A549 (cell line): ENCODE measurements at regions of chr2 and their contacts with region 1.

Region 1: GRCh38 chr2:74587664-74588277 is 33.3 kb downstream of the DOK1 start:
- DNase-seq: peak; percentile 77 to 82
- ATAC-seq: peak; percentile 91 to 92
- H3K4me3 ChIP-seq: no peak overlapping the region
- H3K27ac ChIP-seq: no peak overlapping the region
- H3K4me1 ChIP-seq: peaks cover 14% of the 10 kb centered on the region
- CTCF ChIP-seq: peak; percentile 91
- EP300 ChIP-seq: no peak
- POLR2A ChIP-seq: no peak
- RAD21 ChIP-seq: peak; percentile 93 to 95

Region 2: DNA sequence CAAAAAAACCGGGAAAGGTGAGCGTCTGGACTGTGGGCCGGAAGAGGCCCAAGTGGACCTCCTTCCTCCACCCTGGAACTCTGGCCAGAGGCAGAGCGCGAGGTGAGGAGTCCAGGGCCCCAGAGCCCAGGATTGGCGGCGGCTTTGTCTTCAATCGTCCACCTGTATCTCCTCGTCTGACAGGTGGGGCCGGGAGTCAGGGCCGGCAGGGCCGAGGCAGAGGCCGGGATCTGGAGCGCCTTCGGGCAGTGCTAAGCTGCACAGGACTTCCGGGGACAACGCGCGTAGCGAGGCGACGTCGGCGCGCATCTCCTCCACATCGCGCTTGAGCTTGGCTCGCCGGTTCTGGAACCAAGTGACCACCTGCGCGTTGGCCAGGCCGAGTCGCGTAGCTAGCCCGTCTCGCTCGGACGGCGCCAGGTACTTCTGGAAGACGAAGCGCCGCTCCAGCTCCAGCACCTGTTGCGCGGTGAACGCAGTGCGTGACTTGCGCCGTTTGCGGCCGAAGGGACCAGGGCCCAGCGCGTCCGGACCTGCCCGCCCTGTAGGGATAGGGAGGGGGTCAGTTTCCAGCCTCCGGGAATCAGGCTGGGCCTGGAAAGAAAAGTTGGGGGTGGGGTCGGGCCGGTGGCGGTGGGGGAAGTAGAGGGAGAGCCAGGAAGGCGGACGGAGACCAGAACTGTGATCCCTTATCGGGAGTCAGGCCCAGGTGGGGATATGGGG is 89.8 kb before region 1 on chr2:
- CTCF ChIA-PET with region 1: interaction called, 29 read pairs
- POLR2A ChIA-PET with region 1: interaction called, 3 read pairs
- DNase-seq: no peak
- ATAC-seq: no peak
- H3K4me3 ChIP-seq: no peak overlapping the region
- H3K27ac ChIP-seq: no peak overlapping the region
- H3K4me1 ChIP-seq: peaks cover 5% of the 10 kb centered on the region; the same call in 2 of the 3 replicates
- CTCF ChIP-seq: no peak
- EP300 ChIP-seq: no peak
- POLR2A ChIP-seq: no peak
- RAD21 ChIP-seq: no peak

Region 3: DNA sequence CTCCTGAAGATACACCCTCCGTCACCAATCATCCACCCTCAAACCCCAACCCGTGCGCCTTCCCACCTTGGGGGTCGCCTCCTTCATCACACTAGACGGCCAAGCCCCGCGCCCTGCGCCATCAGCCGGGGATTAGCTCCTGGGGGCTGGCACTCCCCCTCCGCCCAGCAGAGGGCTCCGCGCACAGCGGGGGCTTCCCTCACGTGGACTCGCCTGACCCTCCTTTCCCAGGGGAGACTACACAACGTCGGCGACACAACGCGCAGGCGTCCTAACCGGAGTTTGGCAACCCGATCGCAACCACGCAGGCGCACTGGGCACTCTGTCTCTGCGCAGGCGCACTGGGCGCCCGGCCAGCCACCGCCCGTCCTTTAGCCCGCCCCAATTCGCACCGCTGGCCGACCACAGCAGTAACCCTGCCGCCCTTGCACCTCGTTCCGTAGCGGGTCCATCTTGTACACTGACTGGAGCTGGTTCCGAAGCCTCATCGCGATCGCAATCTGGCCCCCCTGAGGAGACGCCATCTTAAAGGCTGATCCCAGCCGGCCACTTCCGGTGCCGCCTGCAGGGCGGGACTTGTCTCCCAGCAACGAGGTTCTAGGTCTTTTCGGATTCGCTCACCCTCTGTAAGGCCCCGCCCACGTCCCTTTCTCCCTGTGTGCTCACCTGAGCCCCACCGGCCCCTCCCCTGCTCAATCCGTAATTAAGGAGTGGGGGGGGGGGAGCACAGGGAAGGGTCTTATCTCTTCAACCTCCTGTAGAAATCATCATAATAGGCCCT is 80.4 kb before region 1 on chr2 and contains the start of gene PCGF1:
- CTCF ChIA-PET with region 1: interaction called, 38 read pairs
- POLR2A ChIA-PET with region 1: interaction called, 4 read pairs
- DNase-seq: peak; percentile 97 to 99
- ATAC-seq: peak; percentile 81 to 91
- H3K4me3 ChIP-seq: peak within 1 kb of the TSS; percentile 78
- H3K27ac ChIP-seq: peak within 1 kb of the TSS; percentile 95 to 99
- H3K4me1 ChIP-seq: peaks cover 28% of the 10 kb centered on the region
- CTCF ChIP-seq: peak; percentile 47; the same call in 2 of the 3 replicates
- EP300 ChIP-seq: no peak
- POLR2A ChIP-seq: peak; percentile 77
- RAD21 ChIP-seq: peak in 1 of 2 experiments; percentile 40; a peak in 2 of 5 replicates
- polyA plus RNA-seq, gene PCGF1: 53.6 and 55.3 TPM in 2 replicates

Region 4: GRCh38 chr2:74553892-74554645 is 33.7 kb before region 1 on chr2 and contains the start of gene LOXL3:
- CTCF ChIA-PET with region 1: interaction called, 63 read pairs
- POLR2A ChIA-PET with region 1: interaction called, 3 read pairs
- DNase-seq: peak; percentile 80
- ATAC-seq: peak; percentile 73 to 84
- H3K4me3 ChIP-seq: peak within 1 kb of the TSS; percentile 56
- H3K27ac ChIP-seq: peak within 1 kb of the TSS; percentile 63 to 96
- H3K4me1 ChIP-seq: peaks cover 14% of the 10 kb centered on the region; the same call in 2 of the 3 replicates
- CTCF ChIP-seq: no peak
- EP300 ChIP-seq: no peak
- POLR2A ChIP-seq: no peak
- RAD21 ChIP-seq: no peak
- polyA plus RNA-seq, gene LOXL3: 0.30 and 0.40 TPM in 2 replicates

Region 5: GRCh38 chr2:74573747-74574562 is 13.8 kb before region 1 on chr2:
- CTCF ChIA-PET with region 1: interaction called, 181 read pairs
- POLR2A ChIA-PET with region 1: no interaction called
- DNase-seq: no peak
- ATAC-seq: peak in 1 of 2 experiments; percentile 73; a peak in 3 of 6 replicates
- H3K4me3 ChIP-seq: no peak overlapping the region
- H3K27ac ChIP-seq: no peak overlapping the region
- H3K4me1 ChIP-seq: no peaks in the 10 kb centered on the region
- CTCF ChIP-seq: no peak
- EP300 ChIP-seq: no peak
- POLR2A ChIP-seq: no peak
- RAD21 ChIP-seq: no peak

Region 6: DNA sequence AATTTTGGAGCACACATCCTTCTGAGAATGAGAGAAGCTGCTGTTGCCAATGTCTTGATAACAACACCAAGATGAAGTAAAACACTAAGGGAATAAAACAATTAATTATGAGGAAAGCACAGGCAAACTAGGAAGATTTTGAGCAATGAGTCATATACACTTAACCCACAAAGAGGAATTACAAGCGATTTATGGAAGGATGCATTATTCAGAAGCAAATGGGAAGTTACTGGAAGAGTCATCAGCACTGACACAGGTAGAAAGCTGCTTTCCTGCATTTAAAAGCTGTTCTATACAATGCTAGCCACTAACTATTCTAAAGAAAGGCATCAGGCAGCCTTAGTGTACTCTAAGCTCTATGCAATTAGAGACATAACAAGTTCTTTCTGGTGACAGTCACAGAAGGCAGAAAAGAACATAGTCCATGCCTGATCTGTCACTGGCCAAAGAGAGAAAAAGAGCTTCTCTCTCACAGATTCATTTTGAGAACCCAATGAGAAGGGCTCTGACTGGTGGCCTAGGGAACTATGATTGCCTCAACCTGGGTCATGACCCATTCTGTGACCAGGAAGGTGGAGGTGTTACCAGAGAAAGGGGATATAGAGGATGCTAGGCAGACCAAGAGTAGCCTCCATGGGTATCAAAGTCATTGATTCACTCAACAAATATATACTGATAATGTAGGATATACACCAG is 15.0 kb after region 1 on chr2:
- CTCF ChIA-PET with region 1: interaction called, 73 read pairs
- POLR2A ChIA-PET with region 1: no interaction called
- DNase-seq: no peak
- ATAC-seq: peak in 1 of 2 experiments; percentile 51; a peak in 2 of 6 replicates
- H3K4me3 ChIP-seq: no peak overlapping the region
- H3K27ac ChIP-seq: no peak overlapping the region
- H3K4me1 ChIP-seq: no peaks in the 10 kb centered on the region
- CTCF ChIP-seq: no peak
- EP300 ChIP-seq: no peak
- POLR2A ChIP-seq: no peak
- RAD21 ChIP-seq: no peak

Region 7: GRCh38 chr2:74648009-74648443 is 60.3 kb after region 1 on chr2 and contains the start of gene M1AP:
- CTCF ChIA-PET with region 1: no interaction called
- POLR2A ChIA-PET with region 1: no interaction called
- DNase-seq: no peak
- ATAC-seq: no peak
- H3K4me3 ChIP-seq: no peak within 1 kb of the TSS
- H3K27ac ChIP-seq: no peak within 1 kb of the TSS
- H3K4me1 ChIP-seq: no peaks in the 10 kb centered on the region
- CTCF ChIP-seq: no peak
- EP300 ChIP-seq: no peak
- POLR2A ChIP-seq: no peak
- RAD21 ChIP-seq: no peak
- polyA plus RNA-seq, gene M1AP: not detected in 2 replicates